ENCODE measurements at regions of chr12 and their contacts with region 1.

Region 1: GRCh38 chr12:6904280-6905278 is at the start of gene LRRC23:
- DNase-seq: peak; percentile 93 to 98
- H3K4me3 ChIP-seq: peak within 1 kb of the TSS; percentile 86
- H3K27ac ChIP-seq: 0 out of 2 replicates have a peak within 1 kb of the TSS, but pooled peaks have one; percentile 1
- H3K4me1 ChIP-seq: peaks cover 22% of the 10 kb centered on the region
- H3K27me3 ChIP-seq: no peaks in the 10 kb centered on the region
- CTCF ChIP-seq: no peak
- total RNA-seq, gene LRRC23: 29.3 and 38.8 TPM in 2 replicates

Region 2: GRCh38 chr12:6154730-6155459 is 749.7 kb before region 1 on chr12:
- CTCF ChIA-PET with region 1: interaction called, 14 read pairs
- POLR2A ChIA-PET with region 1: no interaction called
- intact Hi-C with region 1: no loop called
- DNase-seq: no peak
- H3K4me3 ChIP-seq: no peak overlapping the region
- H3K27ac ChIP-seq: no peak overlapping the region
- H3K4me1 ChIP-seq: no peaks in the 10 kb centered on the region
- H3K27me3 ChIP-seq: no peaks in the 10 kb centered on the region
- CTCF ChIP-seq: no peak

Region 3: GRCh38 chr12:6919588-6919987 is 15.0 kb after region 1 on chr12:
- CTCF ChIA-PET with region 1: interaction called, 14 read pairs
- POLR2A ChIA-PET with region 1: interaction called, 14 read pairs
- intact Hi-C with region 1: no loop called
- DNase-seq: no peak
- H3K4me3 ChIP-seq: no peak overlapping the region
- H3K27ac ChIP-seq: no peak overlapping the region
- H3K4me1 ChIP-seq: peaks cover 12% of the 10 kb centered on the region
- H3K27me3 ChIP-seq: peaks cover 4% of the 10 kb centered on the region; the same call in 1 of the 2 replicates
- CTCF ChIP-seq: no peak

Region 4: GRCh38 chr12:6978609-6979011 is 74.0 kb after region 1 on chr12:
- CTCF ChIA-PET with region 1: no interaction called
- POLR2A ChIA-PET with region 1: no interaction called
- intact Hi-C with region 1: no loop called
- DNase-seq: no peak
- H3K4me3 ChIP-seq: no peak overlapping the region
- H3K27ac ChIP-seq: peak overlapping the region; percentile 31
- H3K4me1 ChIP-seq: peaks cover 13% of the 10 kb centered on the region
- H3K27me3 ChIP-seq: no peaks in the 10 kb centered on the region
- CTCF ChIP-seq: no peak

Region 5: DNA sequence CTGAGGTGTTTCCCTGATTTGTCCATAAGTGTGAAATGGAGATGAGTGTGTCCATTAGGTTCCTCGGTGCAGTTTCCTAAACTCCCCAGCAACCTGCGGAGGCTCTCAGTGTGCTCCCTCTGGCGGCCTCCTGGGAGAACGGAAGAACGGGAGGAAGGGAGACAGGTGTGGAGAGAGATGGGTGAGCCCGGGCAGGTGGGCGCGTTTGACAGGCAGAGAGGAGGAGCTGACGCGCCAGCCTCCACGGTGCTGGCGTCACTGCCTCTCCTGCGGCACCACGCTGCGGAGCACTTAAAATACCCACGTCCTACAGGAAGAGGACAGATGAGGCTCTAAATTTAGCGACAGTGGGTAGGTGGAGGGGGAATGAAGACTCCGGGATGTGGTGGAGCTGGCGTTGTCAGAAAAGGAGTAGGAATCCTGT is 258.1 kb after region 1 on chr12:
- CTCF ChIA-PET with region 1: no interaction called
- POLR2A ChIA-PET with region 1: no interaction called
- intact Hi-C with region 1: no loop called
- DNase-seq: peak; percentile 55 to 69
- H3K4me3 ChIP-seq: no peak overlapping the region
- H3K27ac ChIP-seq: no peak overlapping the region
- H3K4me1 ChIP-seq: no peaks in the 10 kb centered on the region
- H3K27me3 ChIP-seq: no peaks in the 10 kb centered on the region
- CTCF ChIP-seq: peak; percentile 82